Breast epithelium (tissue), 4 donors: ENCODE measurements at regions of chr3 and their contacts with region 1.

Region 1: DNA sequence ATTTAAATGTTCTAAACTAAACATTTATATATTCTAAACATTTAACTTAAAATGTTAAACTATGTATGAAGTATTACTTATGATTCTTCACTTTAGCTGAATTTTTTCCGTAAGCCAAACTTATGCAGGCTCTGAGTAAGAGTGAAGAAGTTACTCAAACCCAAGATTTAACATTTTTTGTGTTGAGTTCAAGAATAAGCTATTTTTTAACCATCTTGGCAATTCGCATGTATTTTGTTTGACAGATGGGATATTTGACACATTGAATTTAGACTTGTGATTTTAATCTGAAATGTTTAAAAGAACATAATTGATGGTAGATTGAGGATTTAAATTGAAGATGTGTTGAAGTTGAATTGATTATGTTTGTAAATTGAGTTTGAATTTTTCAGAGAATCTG is 14.6 kb upstream of the PPP2R3A start:
- DNase-seq: no peak
- H3K4me3 ChIP-seq: no peak overlapping the region
- H3K27ac ChIP-seq: no peak overlapping the region
- H3K4me1 ChIP-seq: no peaks in the 10 kb centered on the region
- H3K27me3 ChIP-seq: no peaks in the 10 kb centered on the region
- CTCF ChIP-seq: no peak
- POLR2A ChIP-seq: no peak

Region 2: DNA sequence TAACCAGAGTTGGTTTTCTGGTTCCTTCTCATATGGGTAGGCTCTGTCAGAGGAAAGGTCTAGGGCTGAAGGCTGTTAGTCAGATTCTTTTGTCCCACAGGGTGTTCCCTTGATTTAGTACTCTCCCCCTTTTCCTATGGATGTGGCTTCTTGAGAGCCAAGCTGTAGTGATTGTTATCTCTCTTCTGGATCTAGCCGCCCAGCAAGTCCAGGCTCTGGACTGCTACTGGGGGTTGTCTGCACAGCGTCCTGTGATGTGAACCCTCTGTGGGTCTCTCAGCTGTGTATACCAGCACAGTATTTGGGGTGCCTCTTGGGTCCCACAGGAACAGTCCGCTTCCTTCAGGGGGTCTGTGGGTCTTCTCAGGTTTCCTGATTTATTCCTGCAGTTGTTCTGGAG is 85.4 kb after region 1 on chr3:
- intact Hi-C with region 1: loop called (anchors 2 kb)
- DNase-seq: no peak
- H3K4me3 ChIP-seq: no peak overlapping the region
- H3K27ac ChIP-seq: no peak overlapping the region
- H3K4me1 ChIP-seq: no peaks in the 10 kb centered on the region
- H3K27me3 ChIP-seq: no peaks in the 10 kb centered on the region
- CTCF ChIP-seq: no peak
- POLR2A ChIP-seq: no peak